Activated CD4-positive, alpha-beta T cell treated with anti-CD3 and anti-CD28 coated beads for 36 hours (primary cell): ENCODE measurements at regions of chr6 and their contacts with region 1.

Region 1: DNA sequence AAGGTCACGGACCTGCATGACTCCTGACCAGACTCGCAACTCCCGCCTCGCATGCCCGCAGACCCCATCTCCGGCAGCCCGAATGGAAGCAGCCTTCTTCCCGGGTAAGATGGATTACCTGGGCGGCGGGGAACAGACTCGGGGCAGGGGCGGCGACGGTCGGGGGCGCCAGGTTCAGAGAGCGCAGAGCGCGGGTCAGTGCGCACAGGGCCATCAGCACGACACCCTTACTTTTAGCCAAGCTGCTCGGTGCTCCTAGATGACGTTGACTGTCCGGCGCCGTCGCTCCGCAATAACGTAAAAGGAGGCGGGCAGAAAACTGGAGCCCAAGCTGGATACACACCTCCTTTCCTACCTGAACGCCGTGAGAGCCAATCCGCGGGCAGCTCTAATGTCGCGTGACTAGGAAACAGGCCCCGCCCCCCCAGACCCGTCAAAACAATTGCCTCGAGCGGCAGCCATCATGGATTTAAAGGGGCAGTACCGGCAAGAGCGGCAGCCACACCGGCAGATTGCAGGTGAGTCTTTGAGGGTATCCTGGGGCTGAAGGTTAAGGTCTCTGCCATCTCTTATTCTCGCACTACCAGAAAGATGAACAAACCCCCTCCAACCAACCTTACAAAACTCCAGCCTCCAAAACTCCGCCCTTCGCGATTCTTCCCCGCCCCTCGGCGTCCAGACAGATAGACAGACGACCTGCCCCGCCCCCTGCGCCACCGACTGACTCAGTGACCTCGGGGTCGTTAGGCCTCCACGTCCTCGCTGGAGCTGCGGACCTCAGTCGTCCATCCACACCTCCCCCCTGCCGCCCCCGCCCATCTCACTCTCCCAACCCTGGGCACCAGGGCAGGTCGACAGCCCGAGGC is at the starts of genes KLC4 and MRPL2:
- DNase-seq: peak; percentile 99
- ATAC-seq: peak; percentile 98
- H3K4me3 Mint-ChIP-seq: peak within 1 kb of the TSS; percentile 85
- H3K27ac Mint-ChIP-seq: peak within 1 kb of the TSS; percentile 94
- H3K4me1 Mint-ChIP-seq: peaks cover 27% of the 10 kb centered on the region
- H3K27me3 Mint-ChIP-seq: no peaks in the 10 kb centered on the region
- total RNA-seq, gene KLC4: 10.0 to 10.1 TPM
- total RNA-seq, gene MRPL2: 93.9 to 110 TPM

Region 2: DNA sequence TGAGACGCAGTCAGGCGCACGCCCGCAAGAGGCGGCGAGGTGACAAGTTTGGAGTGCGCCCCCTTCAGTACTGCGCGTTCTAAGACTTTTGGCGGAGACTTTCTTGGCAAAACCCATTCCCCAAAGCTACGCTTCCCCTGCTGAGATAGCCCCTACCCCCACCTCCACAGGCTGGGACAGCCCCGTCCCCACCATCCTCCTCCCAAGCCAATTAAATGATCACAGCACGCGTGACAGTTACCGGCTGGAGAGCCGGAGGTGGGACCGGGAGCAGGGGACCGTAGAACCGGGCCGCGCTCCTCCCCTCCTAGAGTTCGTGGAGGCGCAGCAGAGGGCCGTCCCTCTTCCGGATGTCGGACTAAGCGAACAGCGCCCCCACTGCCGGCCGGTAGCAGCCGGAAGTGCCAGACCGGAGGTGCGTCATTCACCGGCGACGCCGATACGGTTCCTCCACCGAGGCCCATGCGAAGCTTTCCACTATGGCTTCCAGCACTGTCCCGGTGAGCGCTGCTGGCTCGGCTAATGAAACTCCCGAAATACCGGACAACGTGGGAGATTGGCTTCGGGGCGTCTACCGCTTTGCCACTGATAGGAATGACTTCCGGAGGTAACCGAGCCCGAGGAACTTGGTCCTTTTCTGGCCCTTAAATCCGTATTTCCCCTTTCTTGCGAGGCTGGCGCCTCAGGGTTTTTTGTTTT is 1272.0 kb before region 1 on chr6 and contains the start of gene TOMM6:
- CTCF ChIA-PET with region 1: no interaction called
- POLR2A ChIA-PET with region 1: no interaction called
- intact Hi-C with region 1: loop called in 1 of 2 experiments (anchors 10 kb)
- DNase-seq: peak; percentile 98
- ATAC-seq: peak; percentile 86
- H3K4me3 Mint-ChIP-seq: peak within 1 kb of the TSS; percentile 96
- H3K27ac Mint-ChIP-seq: peak within 1 kb of the TSS; percentile 98
- H3K4me1 Mint-ChIP-seq: peaks cover 19% of the 10 kb centered on the region
- H3K27me3 Mint-ChIP-seq: peaks cover 2% of the 10 kb centered on the region
- total RNA-seq, gene TOMM6: 282 to 345 TPM

Region 3: GRCh38 chr6:42978839-42979522 is 80.4 kb before region 1 on chr6 and contains the start of gene PEX6:
- CTCF ChIA-PET with region 1: interaction called, 3 read pairs
- POLR2A ChIA-PET with region 1: interaction called, 4 read pairs
- intact Hi-C with region 1: loop called (anchors 1 to 2 kb)
- DNase-seq: peak; percentile 98
- ATAC-seq: peak; percentile 95
- H3K4me3 Mint-ChIP-seq: peak within 1 kb of the TSS; percentile 89
- H3K27ac Mint-ChIP-seq: peak within 1 kb of the TSS; percentile 95
- H3K4me1 Mint-ChIP-seq: peaks cover 45% of the 10 kb centered on the region
- H3K27me3 Mint-ChIP-seq: no peaks in the 10 kb centered on the region
- total RNA-seq, gene PEX6: 10.7 to 14.6 TPM

Region 4: DNA sequence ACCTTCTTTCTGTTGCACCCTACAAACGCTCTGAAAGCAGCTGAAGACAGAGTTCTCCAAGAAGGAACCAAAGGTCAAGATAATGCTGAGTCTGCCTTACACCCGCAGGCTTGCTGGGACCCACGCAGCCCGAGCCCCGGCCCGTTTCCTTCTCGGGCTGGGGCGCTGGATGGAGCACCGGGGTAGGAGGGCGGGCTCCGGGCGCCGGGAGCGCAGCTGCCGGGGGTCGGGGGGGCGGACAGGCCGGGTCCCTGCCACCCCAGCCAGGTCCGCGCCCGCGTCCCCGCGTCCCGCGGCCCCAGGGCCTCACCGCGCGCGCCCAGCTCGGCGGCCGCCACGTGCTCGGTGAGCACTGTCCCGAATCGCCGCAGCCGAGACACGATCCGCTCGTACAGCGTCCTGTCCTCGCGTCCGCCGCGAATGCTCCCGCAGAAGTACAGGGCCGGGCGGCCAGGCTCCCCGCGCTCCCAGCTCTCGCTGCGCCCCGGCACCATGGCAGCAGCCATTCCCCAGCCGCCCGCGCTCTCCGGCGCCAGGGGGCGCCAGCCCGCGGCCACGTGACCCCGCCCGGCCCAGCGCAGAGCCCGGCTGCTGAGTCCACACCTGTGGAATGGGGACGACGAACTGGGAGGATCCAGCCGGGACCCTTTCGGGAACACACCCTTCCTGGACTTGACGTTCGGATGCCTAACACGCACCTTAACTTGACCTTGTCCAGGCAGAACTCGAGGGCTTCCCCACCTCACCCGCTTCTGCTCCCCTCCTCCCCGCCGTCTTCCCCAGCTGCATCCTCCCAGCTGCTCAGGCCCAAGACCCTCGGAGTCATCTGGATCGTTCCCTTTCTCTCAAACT is 169.8 kb after region 1 on chr6 and contains the start of gene DNPH1:
- CTCF ChIA-PET with region 1: no interaction called
- POLR2A ChIA-PET with region 1: no interaction called
- intact Hi-C with region 1: loop called in 1 of 2 experiments (anchors 2 kb)
- DNase-seq: peak; percentile 88
- ATAC-seq: peak; percentile 82
- H3K4me3 Mint-ChIP-seq: peak within 1 kb of the TSS; percentile 92
- H3K27ac Mint-ChIP-seq: peak within 1 kb of the TSS; percentile 91
- H3K4me1 Mint-ChIP-seq: peaks cover 41% of the 10 kb centered on the region
- H3K27me3 Mint-ChIP-seq: peaks cover 2% of the 10 kb centered on the region
- total RNA-seq, gene DNPH1: 58.5 to 80.3 TPM

Region 5: GRCh38 chr6:43263314-43264178 is 204.1 kb after region 1 on chr6:
- CTCF ChIA-PET with region 1: no interaction called
- POLR2A ChIA-PET with region 1: no interaction called
- intact Hi-C with region 1: no loop called
- DNase-seq: peak; percentile 89
- ATAC-seq: peak; percentile 99
- H3K4me3 Mint-ChIP-seq: no peak overlapping the region
- H3K27ac Mint-ChIP-seq: no peak overlapping the region
- H3K4me1 Mint-ChIP-seq: peaks cover 3% of the 10 kb centered on the region
- H3K27me3 Mint-ChIP-seq: no peaks in the 10 kb centered on the region

Region 6: GRCh38 chr6:43427406-43428111 is 368.2 kb after region 1 on chr6 and contains the start of gene ABCC10:
- CTCF ChIA-PET with region 1: no interaction called
- POLR2A ChIA-PET with region 1: interaction called, 3 read pairs
- intact Hi-C with region 1: loop called (anchors 1 kb)
- DNase-seq: peak; percentile 97
- ATAC-seq: peak; percentile 97
- H3K4me3 Mint-ChIP-seq: peak within 1 kb of the TSS; percentile 94
- H3K27ac Mint-ChIP-seq: peak within 1 kb of the TSS; percentile 97
- H3K4me1 Mint-ChIP-seq: peaks cover 21% of the 10 kb centered on the region
- H3K27me3 Mint-ChIP-seq: no peaks in the 10 kb centered on the region
- total RNA-seq, gene ABCC10: 27.8 to 29.0 TPM

Region 7: GRCh38 chr6:43629505-43630300 is 570.3 kb after region 1 on chr6:
- CTCF ChIA-PET with region 1: no interaction called
- POLR2A ChIA-PET with region 1: no interaction called
- intact Hi-C with region 1: loop called in 1 of 2 experiments (anchors 1 kb)
- DNase-seq: peak; percentile 96
- ATAC-seq: peak; percentile 77
- H3K4me3 Mint-ChIP-seq: peak overlapping the region; percentile 88
- H3K27ac Mint-ChIP-seq: peak overlapping the region; percentile 100
- H3K4me1 Mint-ChIP-seq: peaks cover 33% of the 10 kb centered on the region
- H3K27me3 Mint-ChIP-seq: no peaks in the 10 kb centered on the region